GM12878 (cell line): ENCODE measurements at regions of chr7 and their contacts with region 1.

Region 1: DNA sequence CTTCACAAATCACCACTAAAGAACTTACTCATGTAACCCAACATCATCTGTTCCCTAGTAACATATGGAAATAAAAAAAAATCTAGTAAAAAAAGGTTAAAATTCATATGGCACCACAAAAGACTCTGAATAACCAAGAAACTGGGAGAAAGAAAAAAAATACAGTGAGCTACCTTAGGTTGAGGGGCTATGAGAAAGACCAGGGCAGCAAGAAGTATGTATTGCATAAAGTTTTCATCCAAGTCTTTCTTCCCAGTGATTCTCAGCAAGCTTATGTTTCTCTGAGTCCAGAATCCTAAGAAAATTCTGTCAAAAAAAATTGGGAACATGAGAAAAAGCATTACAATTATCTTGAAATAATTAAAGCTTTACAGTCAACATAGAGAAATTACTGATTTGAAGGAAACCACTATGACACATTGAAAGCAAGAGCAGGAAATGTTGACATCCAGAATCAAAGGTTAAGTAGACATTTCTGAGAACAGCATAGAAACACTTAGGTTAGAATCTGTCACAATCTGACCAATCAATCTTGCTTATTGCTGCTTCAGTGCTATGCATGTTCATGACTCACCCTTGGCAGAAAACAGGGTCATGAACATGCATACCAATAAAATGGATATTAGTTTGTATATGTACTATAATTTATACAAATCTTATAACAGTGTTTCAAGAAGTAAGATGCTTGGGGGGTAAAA is 494.0 kb upstream of the POT1 start:
- DNase-seq: no peak
- ATAC-seq: peak; percentile 97
- H3K4me3 ChIP-seq: no peak overlapping the region
- H3K27ac ChIP-seq: no peak overlapping the region
- H3K4me1 ChIP-seq: no peaks in the 10 kb centered on the region
- H3K27me3 ChIP-seq: no peaks in the 10 kb centered on the region
- CTCF ChIP-seq: no peak
- EP300 ChIP-seq: no peak
- POLR2A ChIP-seq: no peak
- RAD21 ChIP-seq: no peak

Region 2: GRCh38 chr7:125241548-125241947 is 182.1 kb before region 1 on chr7:
- CTCF ChIA-PET with region 1: no interaction called
- POLR2A ChIA-PET with region 1: no interaction called
- RAD21 ChIA-PET with region 1: no interaction called
- SMC1A ChIA-PET with region 1: no interaction called
- in situ Hi-C with region 1: no loop called
- intact Hi-C with region 1: no loop called
- DNase-seq: no peak
- ATAC-seq: peak; percentile 52
- H3K4me3 ChIP-seq: no peak overlapping the region
- H3K27ac ChIP-seq: no peak overlapping the region
- H3K4me1 ChIP-seq: no peaks in the 10 kb centered on the region
- H3K27me3 ChIP-seq: no peaks in the 10 kb centered on the region
- CTCF ChIP-seq: no peak
- EP300 ChIP-seq: no peak
- POLR2A ChIP-seq: no peak
- RAD21 ChIP-seq: no peak

Region 3: DNA sequence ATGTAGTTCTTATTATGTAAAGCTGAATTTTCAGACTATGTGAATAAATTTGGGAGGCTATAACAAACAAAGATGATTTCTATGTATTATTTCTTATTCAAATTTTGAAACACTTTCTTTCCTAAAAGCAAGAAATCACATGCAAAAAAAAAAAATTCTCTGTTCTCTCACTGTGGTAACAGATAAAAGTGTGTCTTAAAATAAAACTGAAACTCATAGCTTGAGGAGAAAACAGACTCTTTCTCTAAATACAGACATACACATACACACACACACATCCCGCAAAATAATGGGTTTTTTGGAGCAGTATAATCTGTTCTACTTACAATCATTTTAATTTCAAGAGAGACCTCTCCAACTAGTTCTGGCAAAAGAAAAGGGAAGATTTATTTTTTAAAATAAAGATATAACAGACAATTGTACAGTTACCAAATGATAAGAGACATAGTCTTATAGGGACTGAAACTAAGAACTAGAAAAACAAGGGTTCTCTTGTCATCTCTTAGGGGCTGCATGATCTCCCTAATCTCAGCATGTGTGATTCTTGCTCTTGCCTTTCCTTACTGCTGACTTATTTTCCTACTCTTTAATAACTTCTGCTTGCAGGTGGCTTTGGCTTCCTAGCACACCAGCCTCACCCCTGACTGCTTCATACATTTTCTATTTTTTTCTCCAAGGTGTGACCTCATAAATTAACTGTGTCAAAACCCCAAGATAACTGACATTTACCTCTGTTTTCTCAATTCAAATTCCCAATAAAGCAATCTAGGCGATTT is 10.5 kb before region 1 on chr7:
- CTCF ChIA-PET with region 1: no interaction called
- POLR2A ChIA-PET with region 1: interaction called, 3 read pairs
- RAD21 ChIA-PET with region 1: interaction called, 3 read pairs
- SMC1A ChIA-PET with region 1: interaction called, 15 read pairs
- in situ Hi-C with region 1: no loop called
- intact Hi-C with region 1: no loop called
- DNase-seq: no peak
- ATAC-seq: peak; percentile 89
- H3K4me3 ChIP-seq: no peak overlapping the region
- H3K27ac ChIP-seq: no peak overlapping the region
- H3K4me1 ChIP-seq: no peaks in the 10 kb centered on the region
- H3K27me3 ChIP-seq: no peaks in the 10 kb centered on the region
- CTCF ChIP-seq: no peak
- EP300 ChIP-seq: 0 out of 4 replicates have a peak, but pooled peaks of 1 of the 2 experiments have one; percentile 15
- POLR2A ChIP-seq: no peak
- RAD21 ChIP-seq: no peak

Region 4: GRCh38 chr7:125516194-125516593 is 92.6 kb after region 1 on chr7:
- CTCF ChIA-PET with region 1: no interaction called
- POLR2A ChIA-PET with region 1: no interaction called
- RAD21 ChIA-PET with region 1: no interaction called
- SMC1A ChIA-PET with region 1: no interaction called
- in situ Hi-C with region 1: no loop called
- intact Hi-C with region 1: no loop called
- DNase-seq: no peak
- ATAC-seq: no peak
- H3K4me3 ChIP-seq: no peak overlapping the region
- H3K27ac ChIP-seq: no peak overlapping the region
- H3K4me1 ChIP-seq: no peaks in the 10 kb centered on the region
- H3K27me3 ChIP-seq: no peaks in the 10 kb centered on the region
- CTCF ChIP-seq: no peak
- EP300 ChIP-seq: no peak
- POLR2A ChIP-seq: no peak
- RAD21 ChIP-seq: no peak